Breast epithelium (tissue), 4 donors: ENCODE measurements at regions of chr2 and their contacts with region 1.

Region 1: GRCh38 chr2:210252699-210253606 is 27.7 kb upstream of the ACADL start:
- DNase-seq: no peak
- H3K4me3 ChIP-seq: no peak overlapping the region
- H3K27ac ChIP-seq: no peak overlapping the region
- H3K4me1 ChIP-seq: no peaks in the 10 kb centered on the region
- H3K27me3 ChIP-seq: no peaks in the 10 kb centered on the region
- CTCF ChIP-seq: no peak
- POLR2A ChIP-seq: no peak

Region 2: GRCh38 chr2:210421916-210422315 is 169.0 kb after region 1 on chr2:
- intact Hi-C with region 1: loop called (anchors 5 kb)
- DNase-seq: no peak
- H3K4me3 ChIP-seq: no peak overlapping the region
- H3K27ac ChIP-seq: no peak overlapping the region
- H3K4me1 ChIP-seq: no peaks in the 10 kb centered on the region
- H3K27me3 ChIP-seq: no peaks in the 10 kb centered on the region
- CTCF ChIP-seq: no peak
- POLR2A ChIP-seq: no peak